ENCODE measurements at regions of chr17 and their contacts with region 1.

Region 1: GRCh38 chr17:19648475-19649406 is at the start of gene ALDH3A2:
- DNase-seq: peak; percentile 97
- H3K4me3 Mint-ChIP-seq: peak within 1 kb of the TSS; percentile 97
- H3K27ac Mint-ChIP-seq: peak within 1 kb of the TSS; percentile 97
- H3K4me1 Mint-ChIP-seq: peaks cover 57% of the 10 kb centered on the region
- H3K27me3 Mint-ChIP-seq: no peaks in the 10 kb centered on the region
- CTCF ChIP-seq: no peak
- total RNA-seq, gene ALDH3A2: 40.3 and 50.9 TPM in 2 replicates

Region 2: DNA sequence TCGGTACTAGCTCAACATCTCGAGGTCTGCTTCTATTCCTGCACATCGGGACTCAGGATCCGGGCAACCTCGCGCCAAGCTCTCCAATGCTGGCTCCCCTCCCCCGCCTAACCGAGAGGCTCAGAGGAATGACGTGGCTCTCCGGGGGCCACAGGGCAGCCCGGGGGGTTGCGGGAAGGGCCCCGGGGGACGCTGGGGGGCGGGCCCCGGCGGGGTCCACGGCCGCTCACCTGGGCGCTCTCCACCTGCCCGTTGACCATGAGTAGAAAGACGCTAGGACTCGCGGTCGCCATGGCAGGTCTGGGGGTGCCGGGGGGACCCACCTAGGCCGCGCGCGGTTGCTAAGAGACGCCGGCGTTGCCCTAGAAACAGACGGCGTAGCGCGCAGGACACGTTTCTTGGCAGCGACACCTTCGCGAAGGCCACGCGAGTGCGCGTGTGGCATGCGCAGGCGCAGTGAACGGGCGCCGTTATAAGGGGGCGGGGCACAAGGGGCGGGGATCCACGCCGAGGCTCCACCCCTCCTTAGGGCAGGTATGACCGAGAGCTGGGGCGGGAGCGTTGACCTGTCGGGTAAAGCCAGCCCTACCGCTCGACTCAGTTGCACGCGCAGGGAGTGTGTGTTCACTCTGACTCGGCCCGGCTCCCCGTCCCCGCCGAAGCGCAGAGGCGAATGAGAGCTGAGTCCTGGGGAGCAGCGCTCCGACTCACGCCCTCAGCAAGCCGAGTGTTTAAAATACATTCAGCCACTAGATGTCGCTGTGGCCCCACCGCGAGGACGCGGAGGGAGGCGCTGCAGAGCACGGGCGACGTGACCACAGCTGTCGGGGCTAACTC is 286.2 kb before region 1 on chr17 and contains the start of gene B9D1:
- CTCF ChIA-PET with region 1: interaction called, 8 read pairs
- POLR2A ChIA-PET with region 1: interaction called, 6 read pairs
- intact Hi-C with region 1: loop called (anchors 5 kb)
- DNase-seq: peak; percentile 90
- H3K4me3 Mint-ChIP-seq: peak within 1 kb of the TSS; percentile 78
- H3K27ac Mint-ChIP-seq: peak within 1 kb of the TSS; percentile 89
- H3K4me1 Mint-ChIP-seq: peaks cover 14% of the 10 kb centered on the region
- H3K27me3 Mint-ChIP-seq: no peaks in the 10 kb centered on the region
- CTCF ChIP-seq: peak; percentile 97
- total RNA-seq, gene B9D1: 30.4 and 33.0 TPM in 2 replicates

Region 3: DNA sequence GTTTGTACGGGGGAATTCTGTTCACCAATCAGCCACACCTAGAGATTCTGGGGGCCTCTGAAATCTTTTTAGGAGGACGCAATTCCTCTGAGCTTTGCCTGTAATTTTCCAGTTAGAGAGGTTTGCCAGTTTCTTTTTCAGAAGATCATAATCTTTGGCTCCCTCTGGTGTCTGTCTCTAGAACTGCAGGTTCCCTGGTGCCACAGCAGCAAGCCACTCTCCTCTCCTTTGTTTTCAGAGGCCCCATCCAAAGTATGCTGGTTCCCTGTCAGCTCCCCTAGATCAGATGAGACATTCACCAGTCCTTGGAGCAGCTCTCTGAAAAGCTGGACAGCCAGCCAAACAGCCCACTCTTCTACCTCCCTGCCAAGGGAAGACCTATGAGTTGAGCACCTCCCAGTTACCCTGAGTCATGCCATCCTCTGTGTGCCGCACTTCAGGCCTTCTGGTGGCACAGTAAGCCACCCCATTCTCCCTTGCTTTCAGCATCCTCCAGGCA is 201.6 kb before region 1 on chr17:
- CTCF ChIA-PET with region 1: no interaction called
- POLR2A ChIA-PET with region 1: interaction called, 22 read pairs
- intact Hi-C with region 1: no loop called
- DNase-seq: peak; percentile 73
- H3K4me3 Mint-ChIP-seq: no peak overlapping the region
- H3K27ac Mint-ChIP-seq: peak overlapping the region; percentile 93
- H3K4me1 Mint-ChIP-seq: peaks cover 27% of the 10 kb centered on the region
- H3K27me3 Mint-ChIP-seq: no peaks in the 10 kb centered on the region
- CTCF ChIP-seq: peak; percentile 88

Region 4: GRCh38 chr17:19660219-19660870 is 11.6 kb after region 1 on chr17:
- CTCF ChIA-PET with region 1: interaction called, 7 read pairs
- POLR2A ChIA-PET with region 1: interaction called, 20 read pairs
- intact Hi-C with region 1: no loop called
- DNase-seq: no peak
- H3K4me3 Mint-ChIP-seq: no peak overlapping the region
- H3K27ac Mint-ChIP-seq: peak overlapping the region; percentile 16
- H3K4me1 Mint-ChIP-seq: no peaks in the 10 kb centered on the region
- H3K27me3 Mint-ChIP-seq: no peaks in the 10 kb centered on the region
- CTCF ChIP-seq: no peak

Region 5: GRCh38 chr17:19728079-19728495 is 79.3 kb after region 1 on chr17:
- CTCF ChIA-PET with region 1: interaction called, 16 read pairs
- POLR2A ChIA-PET with region 1: interaction called, 340 read pairs
- intact Hi-C with region 1: loop called (anchors 5 kb)
- DNase-seq: peak; percentile 96
- H3K4me3 Mint-ChIP-seq: no peak overlapping the region
- H3K27ac Mint-ChIP-seq: peak overlapping the region; percentile 97
- H3K4me1 Mint-ChIP-seq: peaks cover 25% of the 10 kb centered on the region
- H3K27me3 Mint-ChIP-seq: no peaks in the 10 kb centered on the region
- CTCF ChIP-seq: no peak

Region 6: GRCh38 chr17:19753049-19753444 is 104.3 kb after region 1 on chr17:
- CTCF ChIA-PET with region 1: interaction called, 22 read pairs
- POLR2A ChIA-PET with region 1: interaction called, 184 read pairs
- intact Hi-C with region 1: loop called (anchors 1 kb)
- DNase-seq: peak; percentile 97
- H3K4me3 Mint-ChIP-seq: peak overlapping the region; percentile 9
- H3K27ac Mint-ChIP-seq: peak overlapping the region; percentile 79
- H3K4me1 Mint-ChIP-seq: peaks cover 56% of the 10 kb centered on the region
- H3K27me3 Mint-ChIP-seq: no peaks in the 10 kb centered on the region
- CTCF ChIP-seq: no peak